ENCODE measurements at regions of chr2 and their contacts with region 1.

Region 1: DNA sequence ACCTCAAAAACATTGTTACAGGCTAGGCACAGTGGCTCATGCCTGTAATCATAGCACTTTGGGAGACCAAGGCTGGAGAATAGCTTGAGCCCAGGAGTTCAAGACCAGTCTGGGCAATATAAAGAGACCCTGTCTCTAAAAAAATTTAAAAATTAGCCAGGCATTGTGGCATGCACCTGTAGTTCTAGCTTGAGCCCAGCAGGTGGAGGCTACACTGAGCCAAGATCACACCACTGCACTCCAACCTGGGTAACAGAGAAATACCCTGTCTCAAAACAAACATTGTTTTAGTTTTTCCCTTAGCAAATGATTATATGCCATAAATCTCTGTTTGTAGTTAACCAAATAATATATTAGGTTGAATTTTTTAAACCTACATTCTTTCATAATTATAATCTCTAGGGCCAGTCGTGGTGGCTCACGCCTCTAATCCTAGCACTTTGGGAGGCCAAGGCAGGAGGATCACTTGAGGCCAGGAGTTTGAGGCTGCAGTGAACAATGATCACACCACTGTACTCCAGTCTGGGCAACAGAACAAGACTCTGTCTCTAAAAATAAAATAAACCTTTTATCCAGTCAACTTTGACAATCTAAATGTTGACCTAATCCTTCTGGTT is 13.3 kb upstream of the CYP20A1 start:
- DNase-seq: no peak
- ATAC-seq: no peak
- H3K4me3 ChIP-seq: no peak overlapping the region
- H3K27ac ChIP-seq: no peak overlapping the region
- H3K4me1 ChIP-seq: no peaks in the 10 kb centered on the region
- H3K27me3 ChIP-seq: no peaks in the 10 kb centered on the region

Region 2: DNA sequence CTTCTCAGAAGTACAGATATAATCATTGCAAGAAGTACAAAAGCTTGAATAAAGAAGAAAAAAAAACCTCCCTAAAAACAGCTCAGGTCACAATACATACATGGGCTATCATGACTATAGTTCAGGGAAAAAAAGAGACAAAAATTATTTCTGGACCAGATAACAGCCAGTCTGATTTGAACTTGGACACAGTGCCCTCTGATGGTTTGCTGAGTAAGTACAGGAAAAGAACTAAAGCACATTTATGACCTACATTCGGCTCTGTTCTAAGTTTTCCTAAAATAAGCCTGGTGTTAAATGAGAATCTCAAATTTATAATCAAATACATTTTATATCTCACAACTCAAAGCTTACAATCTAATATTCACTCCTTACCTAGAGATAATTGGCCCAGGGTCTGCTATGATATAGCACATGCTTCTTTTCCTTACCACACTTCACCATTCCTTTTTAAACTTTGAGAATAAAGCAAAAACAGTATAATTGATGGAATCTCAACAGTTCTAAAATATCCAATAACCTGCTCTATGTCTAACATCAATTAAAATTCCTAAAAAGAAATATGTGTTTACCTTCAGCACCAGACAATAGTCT is 228.4 kb after region 1 on chr2:
- intact Hi-C with region 1: loop called in 1 of 4 experiments (anchors 10 kb)
- DNase-seq: no peak
- ATAC-seq: peak; percentile 61 to 72
- H3K4me3 ChIP-seq: no peak overlapping the region
- H3K27ac ChIP-seq: no peak overlapping the region
- H3K4me1 ChIP-seq: no peaks in the 10 kb centered on the region
- H3K27me3 ChIP-seq: no peaks in the 10 kb centered on the region

Region 3: GRCh38 chr2:203599509-203599908 is 374.0 kb after region 1 on chr2:
- intact Hi-C with region 1: no loop called
- DNase-seq: no peak
- ATAC-seq: no peak
- H3K4me3 ChIP-seq: no peak overlapping the region
- H3K27ac ChIP-seq: no peak overlapping the region
- H3K4me1 ChIP-seq: peaks cover 3% of the 10 kb centered on the region
- H3K27me3 ChIP-seq: no peaks in the 10 kb centered on the region

Measured in right cardiac atrium (tissue), 5 donors.